Panc1 (cell line): ENCODE measurements at regions of chr1 and their contacts with region 1.

Region 1: GRCh38 chr1:146036965-146037646 is 15.6 kb upstream of the HJV start:
- DNase-seq: peak; percentile 95
- ATAC-seq: peak; percentile 55
- H3K4me3 ChIP-seq: peak overlapping the region; percentile 66 to 99
- H3K27ac ChIP-seq: peak overlapping the region; percentile 77
- H3K4me1 ChIP-seq: peaks cover 6% of the 10 kb centered on the region; the same call in 1 of the 2 replicates
- H3K27me3 ChIP-seq: no peaks in the 10 kb centered on the region
- CTCF ChIP-seq: no peak

Region 2: GRCh38 chr1:145706086-145706680 is 330.9 kb before region 1 on chr1:
- CTCF ChIA-PET with region 1: no interaction called
- POLR2A ChIA-PET with region 1: no interaction called
- in situ Hi-C with region 1: no loop called
- intact Hi-C with region 1: no loop called
- DNase-seq: no peak
- ATAC-seq: no peak
- H3K4me3 ChIP-seq: no peak overlapping the region
- H3K27ac ChIP-seq: no peak overlapping the region; the same call in 1 of the 2 replicates
- H3K4me1 ChIP-seq: peaks cover 15% of the 10 kb centered on the region
- H3K27me3 ChIP-seq: no peaks in the 10 kb centered on the region
- CTCF ChIP-seq: no peak

Region 3: DNA sequence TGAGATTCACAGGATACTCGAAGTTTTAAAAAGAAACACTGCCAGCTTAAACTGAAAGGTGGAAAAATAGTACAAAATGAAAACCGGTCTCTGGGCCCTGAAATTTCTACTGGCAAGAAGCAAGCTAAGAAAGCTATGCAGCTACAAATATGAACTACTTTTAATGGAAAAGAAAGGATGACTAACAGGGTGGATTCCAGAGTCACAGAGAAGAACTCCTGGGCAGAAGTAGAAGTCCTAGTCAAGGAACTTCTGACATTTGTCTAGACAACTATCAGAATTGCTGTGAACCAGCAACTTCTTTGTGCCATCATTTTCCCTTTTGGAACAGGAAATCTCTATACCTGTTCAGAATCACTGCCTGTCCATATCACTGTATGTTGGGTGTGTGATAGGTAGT is 279.7 kb before region 1 on chr1:
- CTCF ChIA-PET with region 1: no interaction called
- POLR2A ChIA-PET with region 1: no interaction called
- in situ Hi-C with region 1: no loop called
- intact Hi-C with region 1: no loop called
- DNase-seq: no peak
- ATAC-seq: no peak
- H3K4me3 ChIP-seq: no peak overlapping the region
- H3K27ac ChIP-seq: no peak overlapping the region
- H3K4me1 ChIP-seq: no peaks in the 10 kb centered on the region
- H3K27me3 ChIP-seq: no peaks in the 10 kb centered on the region
- CTCF ChIP-seq: no peak

Region 4: GRCh38 chr1:145988768-145989167 is 48.3 kb before region 1 on chr1:
- CTCF ChIA-PET with region 1: no interaction called
- POLR2A ChIA-PET with region 1: no interaction called
- in situ Hi-C with region 1: no loop called
- intact Hi-C with region 1: no loop called
- DNase-seq: no peak
- ATAC-seq: no peak
- H3K4me3 ChIP-seq: no peak overlapping the region
- H3K27ac ChIP-seq: no peak overlapping the region
- H3K4me1 ChIP-seq: no peaks in the 10 kb centered on the region
- H3K27me3 ChIP-seq: no peaks in the 10 kb centered on the region; the same call in 1 of the 2 replicates
- CTCF ChIP-seq: no peak

Region 5: DNA sequence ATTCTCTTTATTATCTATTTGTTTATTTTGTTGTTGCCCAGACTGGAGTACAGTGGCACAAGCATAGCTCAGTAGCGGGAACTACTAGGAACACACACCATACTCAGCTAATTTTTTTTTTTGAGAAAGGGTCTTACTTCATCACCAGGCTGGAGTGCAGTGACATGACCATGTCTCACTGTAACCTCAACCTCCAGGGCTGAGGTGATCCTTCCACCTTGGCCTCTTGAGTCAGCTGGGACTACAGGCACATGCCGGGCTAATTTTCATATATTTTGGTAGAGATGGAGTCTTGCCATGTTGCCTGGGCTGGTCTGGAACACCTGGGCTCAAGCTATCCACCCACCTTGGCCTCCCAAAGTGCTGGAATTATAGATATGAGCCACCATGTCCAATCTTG is 35.4 kb before region 1 on chr1:
- CTCF ChIA-PET with region 1: no interaction called
- POLR2A ChIA-PET with region 1: interaction called, 11 read pairs
- in situ Hi-C with region 1: no loop called
- intact Hi-C with region 1: no loop called
- DNase-seq: no peak
- ATAC-seq: no peak
- H3K4me3 ChIP-seq: no peak overlapping the region
- H3K27ac ChIP-seq: no peak overlapping the region
- H3K4me1 ChIP-seq: peaks cover 10% of the 10 kb centered on the region
- H3K27me3 ChIP-seq: no peaks in the 10 kb centered on the region
- CTCF ChIP-seq: no peak

Region 6: GRCh38 chr1:146049436-146049835 is 12.3 kb after region 1 on chr1:
- CTCF ChIA-PET with region 1: no interaction called
- POLR2A ChIA-PET with region 1: interaction called, 26 read pairs
- in situ Hi-C with region 1: no loop called
- intact Hi-C with region 1: no loop called
- DNase-seq: no peak
- ATAC-seq: no peak
- H3K4me3 ChIP-seq: no peak overlapping the region
- H3K27ac ChIP-seq: no peak overlapping the region
- H3K4me1 ChIP-seq: no peaks in the 10 kb centered on the region; the same call in 1 of the 2 replicates
- H3K27me3 ChIP-seq: no peaks in the 10 kb centered on the region
- CTCF ChIP-seq: no peak